ENCODE measurements at regions of chr5 and their contacts with region 1.

Region 1: GRCh38 chr5:131589510-131590348 is 45.3 kb downstream of the RAPGEF6 start:
- DNase-seq: no peak
- ATAC-seq: peak; percentile 67 to 76
- H3K4me3 ChIP-seq: no peak overlapping the region
- H3K27ac ChIP-seq: no peak overlapping the region
- H3K4me1 ChIP-seq: no peaks in the 10 kb centered on the region
- H3K27me3 ChIP-seq: no peaks in the 10 kb centered on the region

Region 2: GRCh38 chr5:131684595-131684994 is 94.9 kb after region 1 on chr5:
- intact Hi-C with region 1: no loop called
- DNase-seq: no peak
- ATAC-seq: no peak
- H3K4me3 ChIP-seq: no peak overlapping the region
- H3K27ac ChIP-seq: no peak overlapping the region
- H3K4me1 ChIP-seq: no peaks in the 10 kb centered on the region
- H3K27me3 ChIP-seq: no peaks in the 10 kb centered on the region

Region 3: GRCh38 chr5:131796793-131797693 is 207.3 kb after region 1 on chr5 and contains the start of gene FNIP1:
- intact Hi-C with region 1: loop called in 1 of 4 experiments (anchors 10 kb)
- DNase-seq: peak; percentile 100
- ATAC-seq: peak; percentile 99
- H3K4me3 ChIP-seq: peak within 1 kb of the TSS; percentile 76
- H3K27ac ChIP-seq: peak within 1 kb of the TSS; percentile 91
- H3K4me1 ChIP-seq: peaks cover 3% of the 10 kb centered on the region
- H3K27me3 ChIP-seq: no peaks in the 10 kb centered on the region
- total RNA-seq, gene FNIP1: 26.8 to 35.8 (median 31.2) TPM

Region 4: DNA sequence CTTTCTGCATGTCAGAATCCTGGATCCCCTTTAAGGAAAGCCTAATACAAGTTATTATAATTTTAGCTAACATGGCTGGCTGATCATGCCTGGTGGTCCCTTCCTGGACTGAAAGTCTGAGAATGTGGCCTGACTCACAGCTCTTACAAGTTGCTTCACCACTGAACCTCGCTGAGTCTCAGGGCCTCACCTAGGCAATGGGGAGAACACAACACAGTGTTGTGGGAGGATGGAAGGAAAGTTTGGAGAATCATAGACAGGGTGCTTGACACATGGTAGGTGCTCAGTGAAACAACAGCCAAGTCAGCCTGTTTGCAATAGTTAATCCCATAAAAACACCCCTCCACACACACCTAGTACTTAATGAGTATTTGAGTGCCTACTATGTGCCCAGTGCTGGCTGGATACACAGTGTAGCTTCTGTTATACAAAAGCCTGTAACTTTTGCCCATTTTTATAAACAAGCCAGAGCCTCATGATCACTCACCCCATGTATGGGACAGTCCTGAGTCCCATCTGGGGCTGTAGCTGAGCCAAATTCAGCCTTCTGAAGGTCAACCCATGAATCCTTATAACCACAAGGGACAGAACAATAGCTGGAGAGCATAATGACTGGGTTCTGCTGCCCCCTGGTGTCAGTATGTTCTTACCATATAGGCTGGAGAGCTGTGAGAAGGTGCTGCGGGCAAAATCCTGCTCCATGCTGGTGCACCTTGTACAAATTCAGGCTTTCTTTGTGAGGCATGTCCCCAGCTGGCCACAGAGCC is 417.9 kb after region 1 on chr5:
- intact Hi-C with region 1: loop called (anchors 5 kb)
- DNase-seq: peak; percentile 76 to 82 (median 78)
- ATAC-seq: peak; percentile 65 to 79
- H3K4me3 ChIP-seq: no peak overlapping the region
- H3K27ac ChIP-seq: no peak overlapping the region
- H3K4me1 ChIP-seq: peaks cover 12% of the 10 kb centered on the region
- H3K27me3 ChIP-seq: no peaks in the 10 kb centered on the region

Measured in right cardiac atrium (tissue), 5 donors.